Heart left ventricle (tissue), 16 donors: ENCODE measurements at regions of chr2 and their contacts with region 1.

Region 1: GRCh38 chr2:46315103-46315890 is 18.1 kb downstream of the EPAS1 start:
- DNase-seq: peak; percentile 90 to 96 (median 93)
- ATAC-seq: peak; percentile 90 to 96 (median 94)
- H3K4me3 ChIP-seq: peak overlapping the region in 3 of 12 donors; percentile 3 to 6 (median 4)
- H3K27ac ChIP-seq: peak overlapping the region; percentile 70 to 96 (median 82)
- H3K4me1 ChIP-seq: peaks cover 20 to 100% (median 95%) of the 10 kb centered on the region in 12 donors
- H3K27me3 ChIP-seq: no peaks in the 10 kb centered on the region
- CTCF ChIP-seq: no peak
- POLR2A ChIP-seq: peak in 1 of 2 donors; percentile 28

Region 2: DNA sequence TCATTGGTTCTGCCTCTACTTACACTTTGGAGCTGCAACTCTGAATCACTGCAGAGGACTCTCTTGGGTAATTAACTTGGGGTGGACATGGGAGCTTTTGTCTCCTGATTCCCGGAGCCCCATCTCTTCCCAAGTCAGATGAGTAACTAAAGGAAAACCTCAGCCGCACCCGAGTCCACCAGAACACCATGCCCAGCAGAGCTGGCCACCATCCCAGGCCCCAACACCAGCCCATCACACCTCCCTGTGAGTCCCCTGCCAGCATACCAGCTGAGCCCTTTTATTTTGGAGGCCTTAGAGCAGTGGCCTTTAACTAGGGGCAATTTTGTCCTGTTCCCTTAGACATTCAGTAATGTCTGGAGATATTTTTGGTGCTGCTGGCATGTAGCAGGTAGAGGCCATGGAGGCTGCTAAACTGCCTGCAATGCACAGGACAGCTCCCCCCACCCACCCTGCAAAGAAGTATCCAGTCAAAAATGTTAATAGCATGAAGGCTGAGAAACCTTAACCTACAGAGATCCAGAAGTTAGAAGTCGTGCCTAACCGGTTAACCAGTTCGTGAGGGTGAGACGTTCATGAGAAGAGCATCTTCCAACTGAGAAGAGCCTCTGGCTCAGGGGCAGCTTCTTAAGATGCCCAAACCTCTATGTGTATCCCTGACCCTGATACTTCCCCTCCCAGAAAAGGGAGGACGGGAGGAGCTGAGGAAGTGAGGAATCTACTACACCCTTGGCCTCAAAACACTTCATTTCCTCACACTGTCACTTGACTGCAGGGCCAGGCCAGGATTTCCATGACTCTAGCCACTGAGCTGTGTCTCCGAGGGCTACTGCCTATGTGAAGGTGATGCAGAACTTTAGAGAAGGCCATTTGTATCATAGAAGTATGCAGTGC is 158.0 kb before region 1 on chr2:
- intact Hi-C with region 1: no loop called
- DNase-seq: peak in 1 of 5 donors; percentile 58
- ATAC-seq: peak; percentile 81 to 84 (median 82)
- H3K4me3 ChIP-seq: no peak overlapping the region
- H3K27ac ChIP-seq: peak overlapping the region in 5 of 12 donors; percentile 8 to 58 (median 19)
- H3K4me1 ChIP-seq: peaks cover 0 to 36% (median 23%) of the 10 kb centered on the region in 12 donors
- H3K27me3 ChIP-seq: no peaks in the 10 kb centered on the region
- CTCF ChIP-seq: no peak
- POLR2A ChIP-seq: no peak

Region 3: DNA sequence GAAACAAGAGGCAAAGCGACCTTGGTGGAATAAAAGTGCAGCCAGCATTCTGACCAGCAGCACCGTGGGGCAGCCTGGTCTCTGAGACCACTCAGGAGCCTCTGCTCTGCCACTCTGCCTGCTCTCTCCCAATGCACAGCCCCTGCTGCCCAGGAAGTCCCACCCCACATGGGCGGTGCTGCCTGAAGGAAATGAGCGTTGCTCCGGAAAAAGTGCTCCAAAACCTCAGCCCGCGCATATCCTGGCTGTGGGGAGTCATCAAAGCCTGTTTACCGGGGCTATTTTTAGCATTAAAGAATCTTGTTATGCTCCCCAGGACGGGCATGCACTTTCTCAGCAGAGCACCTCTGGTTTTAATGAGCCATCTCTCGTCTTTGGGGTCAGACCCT is 36.4 kb after region 1 on chr2:
- intact Hi-C with region 1: loop called in 3 of 10 experiments (anchors 5 kb)
- DNase-seq: peak; percentile 66 to 81 (median 76)
- ATAC-seq: peak; percentile 36 to 77 (median 57)
- H3K4me3 ChIP-seq: peak overlapping the region in 8 of 12 donors; percentile 2 to 30 (median 22)
- H3K27ac ChIP-seq: peak overlapping the region; percentile 63 to 84 (median 76)
- H3K4me1 ChIP-seq: peaks cover 18 to 96% (median 78%) of the 10 kb centered on the region in 12 donors
- H3K27me3 ChIP-seq: no peaks in the 10 kb centered on the region
- CTCF ChIP-seq: no peak
- POLR2A ChIP-seq: peak in 1 of 2 donors; percentile 38

Region 4: GRCh38 chr2:46763861-46764260 is 448.6 kb after region 1 on chr2:
- intact Hi-C with region 1: no loop called
- DNase-seq: no peak
- ATAC-seq: no peak
- H3K4me3 ChIP-seq: no peak overlapping the region
- H3K27ac ChIP-seq: no peak overlapping the region
- H3K4me1 ChIP-seq: peaks cover 0 to 10% (median 0%) of the 10 kb centered on the region in 12 donors
- H3K27me3 ChIP-seq: no peaks in the 10 kb centered on the region
- CTCF ChIP-seq: no peak
- POLR2A ChIP-seq: no peak

Region 5: GRCh38 chr2:46887028-46887885 is 572.0 kb after region 1 on chr2:
- intact Hi-C with region 1: no loop called
- DNase-seq: no peak
- ATAC-seq: no peak
- H3K4me3 ChIP-seq: no peak overlapping the region
- H3K27ac ChIP-seq: peak overlapping the region in 6 of 12 donors; percentile 27 to 61 (median 46)
- H3K4me1 ChIP-seq: peaks cover 3 to 22% (median 9%) of the 10 kb centered on the region in 12 donors
- H3K27me3 ChIP-seq: no peaks in the 10 kb centered on the region
- CTCF ChIP-seq: no peak
- POLR2A ChIP-seq: no peak